Activated CD4-positive, alpha-beta memory T cell treated with anti-CD3 and anti-CD28 coated beads for 36 hours (primary cell): ENCODE measurements at regions of chr12 and their contacts with region 1.

Region 1: DNA sequence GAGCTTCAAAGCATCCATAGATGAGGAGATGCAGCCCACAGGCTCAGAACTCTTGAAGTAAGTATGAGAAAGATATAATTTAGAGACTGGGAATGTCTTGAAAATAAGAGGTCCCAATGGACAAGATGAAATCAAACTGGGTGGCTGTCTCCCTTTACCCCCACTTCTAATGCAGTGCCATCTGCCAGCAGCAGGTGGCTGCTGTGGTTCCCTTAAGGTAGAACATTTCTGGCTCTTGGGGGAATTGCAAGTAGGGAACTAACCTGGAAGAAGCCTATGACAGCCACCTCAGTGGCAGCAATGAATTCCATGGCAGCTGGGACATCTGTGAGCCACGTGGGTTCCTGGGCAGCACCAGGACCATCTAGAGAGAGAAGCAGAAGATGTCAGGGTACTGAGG is 648 bp downstream of the ERP27 start:
- DNase-seq: peak; percentile 33
- H3K4me3 Mint-ChIP-seq: no peak overlapping the region
- H3K27ac Mint-ChIP-seq: peak overlapping the region; percentile 50
- H3K4me1 Mint-ChIP-seq: peaks cover 38% of the 10 kb centered on the region
- H3K27me3 Mint-ChIP-seq: no peaks in the 10 kb centered on the region

Region 2: DNA sequence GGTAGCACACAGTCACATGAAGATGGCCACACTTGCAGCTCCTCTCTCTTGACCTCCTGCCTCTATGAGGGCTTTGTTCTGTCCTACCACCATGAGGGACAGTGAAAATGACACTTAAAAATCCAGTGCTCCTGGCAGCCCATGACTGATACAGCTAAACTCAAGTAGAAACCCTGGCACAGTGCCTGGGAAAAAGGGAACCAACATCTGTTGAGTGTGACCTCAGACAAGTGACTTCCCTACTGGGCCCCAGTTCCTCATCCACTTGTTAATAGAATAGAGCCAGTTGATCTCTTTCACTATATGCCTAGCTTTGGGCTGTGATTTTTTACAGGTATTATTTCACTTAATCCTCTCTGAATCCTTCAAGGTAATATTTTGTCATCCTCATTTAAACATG is 246.1 kb before region 1 on chr12:
- CTCF ChIA-PET with region 1: no interaction called
- POLR2A ChIA-PET with region 1: no interaction called
- intact Hi-C with region 1: no loop called
- DNase-seq: no peak
- H3K4me3 Mint-ChIP-seq: no peak overlapping the region
- H3K27ac Mint-ChIP-seq: no peak overlapping the region
- H3K4me1 Mint-ChIP-seq: no peaks in the 10 kb centered on the region
- H3K27me3 Mint-ChIP-seq: peaks cover 13% of the 10 kb centered on the region

Region 3: GRCh38 chr12:14920475-14921126 is 17.1 kb before region 1 on chr12:
- CTCF ChIA-PET with region 1: no interaction called
- POLR2A ChIA-PET with region 1: no interaction called
- intact Hi-C with region 1: loop called (anchors 2 kb)
- DNase-seq: no peak
- H3K4me3 Mint-ChIP-seq: no peak overlapping the region
- H3K27ac Mint-ChIP-seq: peak overlapping the region; percentile 21
- H3K4me1 Mint-ChIP-seq: peaks cover 14% of the 10 kb centered on the region
- H3K27me3 Mint-ChIP-seq: no peaks in the 10 kb centered on the region